GM12878 (cell line): ENCODE measurements at regions of chr1 and their contacts with region 1.

Region 1: DNA sequence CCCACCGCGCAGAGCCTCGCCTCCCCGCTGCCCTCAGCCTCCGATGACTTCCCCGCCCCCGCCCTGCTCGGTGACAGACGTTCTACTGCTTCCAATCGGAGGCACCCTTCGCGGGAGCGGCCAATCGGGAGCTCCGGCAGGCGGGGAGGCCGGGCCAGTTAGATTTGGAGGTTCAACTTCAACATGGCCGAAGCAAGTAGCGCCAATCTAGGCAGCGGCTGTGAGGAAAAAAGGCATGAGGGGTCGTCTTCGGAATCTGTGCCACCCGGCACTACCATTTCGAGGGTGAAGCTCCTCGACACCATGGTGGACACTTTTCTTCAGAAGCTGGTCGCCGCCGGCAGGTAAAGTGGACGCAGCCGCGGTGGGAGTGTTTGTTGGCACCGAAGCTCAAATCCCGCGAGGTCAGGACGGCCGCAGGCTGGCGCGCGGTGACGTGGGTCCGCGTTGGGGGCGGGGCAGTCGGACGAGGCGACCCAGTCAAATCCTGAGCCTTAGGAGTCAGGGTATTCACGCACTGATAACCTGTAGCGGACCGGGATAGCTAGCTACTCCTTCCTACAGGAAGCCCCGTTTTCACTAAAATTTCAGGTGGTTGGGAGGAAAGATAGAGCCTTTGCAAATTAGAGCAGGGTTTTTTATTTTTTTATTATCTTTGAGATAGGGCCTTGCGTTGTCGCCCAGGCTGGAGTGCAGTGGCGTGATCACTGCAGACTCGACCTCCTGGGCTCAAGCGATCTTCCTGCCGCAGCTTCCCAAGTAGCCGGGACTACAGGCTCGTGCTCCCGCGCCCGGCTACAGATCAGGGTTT is at the start of gene PMF1:
- DNase-seq: peak; percentile 88
- ATAC-seq: peak; percentile 99
- H3K4me3 ChIP-seq: peak within 1 kb of the TSS; percentile 96
- H3K27ac ChIP-seq: peak within 1 kb of the TSS; percentile 99
- H3K4me1 ChIP-seq: peaks cover 10% of the 10 kb centered on the region
- H3K27me3 ChIP-seq: no peaks in the 10 kb centered on the region
- CTCF ChIP-seq: 0 out of 6 replicates have a peak, but pooled peaks of 1 of the 3 experiments have one; percentile 1
- EP300 ChIP-seq: no peak
- POLR2A ChIP-seq: peak; percentile 94
- RAD21 ChIP-seq: no peak
- polyA plus RNA-seq, gene PMF1: 6.7 to 17.6 TPM

Region 2: DNA sequence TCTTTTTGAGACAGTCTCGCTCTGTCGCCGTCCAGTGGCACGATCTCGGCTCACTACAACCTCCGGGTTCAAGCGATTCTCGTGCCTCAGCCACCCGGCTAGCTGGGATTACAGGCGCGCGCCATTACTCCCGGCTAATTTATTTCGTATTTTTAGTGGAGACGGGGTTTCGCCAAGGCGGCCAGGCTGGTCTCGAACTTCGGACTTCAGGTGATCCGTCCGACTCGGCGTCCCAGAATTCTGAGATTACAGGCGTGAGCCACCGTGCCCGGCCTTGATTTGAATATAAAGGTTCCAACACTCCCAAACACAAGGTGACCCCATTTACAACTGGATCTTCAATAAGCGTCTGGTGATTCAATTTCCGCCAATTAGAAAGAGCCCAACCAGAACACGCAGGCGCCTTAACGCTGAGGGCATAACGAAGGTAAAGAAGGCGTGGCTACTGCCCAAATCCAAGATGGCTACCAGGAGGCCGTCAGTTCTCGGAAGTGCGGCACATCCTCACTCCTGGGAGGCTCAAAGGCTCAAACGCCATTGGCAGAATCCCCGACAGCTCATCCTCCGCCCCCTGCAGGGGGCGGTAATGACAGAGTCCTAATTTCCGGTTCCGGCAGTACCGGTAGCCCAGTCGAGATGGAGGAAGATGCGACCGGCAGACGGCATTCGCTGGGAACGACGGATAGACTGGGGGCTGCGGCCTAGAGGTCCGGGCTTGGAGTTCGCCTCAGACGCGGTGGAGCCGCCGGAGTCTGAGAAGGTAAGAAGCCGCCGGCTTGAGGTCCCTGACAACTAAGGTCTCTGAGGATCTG is 19.3 kb before region 1 on chr1 and contains the start of gene SLC25A44:
- CTCF ChIA-PET with region 1: interaction called, 28 read pairs
- POLR2A ChIA-PET with region 1: interaction called, 139 read pairs
- RAD21 ChIA-PET with region 1: interaction called, 65 read pairs
- SMC1A ChIA-PET with region 1: interaction called, 50 read pairs
- in situ Hi-C with region 1: no loop called
- intact Hi-C with region 1: no loop called
- DNase-seq: peak; percentile 100
- ATAC-seq: peak; percentile 96
- H3K4me3 ChIP-seq: peak within 1 kb of the TSS; percentile 100
- H3K27ac ChIP-seq: peak within 1 kb of the TSS; percentile 87
- H3K4me1 ChIP-seq: peaks cover 6% of the 10 kb centered on the region
- H3K27me3 ChIP-seq: no peaks in the 10 kb centered on the region
- CTCF ChIP-seq: peak; percentile 35 to 48 (median 45); a peak in 5 of 6 replicates
- EP300 ChIP-seq: no peak
- POLR2A ChIP-seq: peak; percentile 89
- RAD21 ChIP-seq: no peak
- polyA plus RNA-seq, gene SLC25A44: 7.1 to 9.2 TPM

Region 3: GRCh38 chr1:156198831-156199349 is 14.1 kb before region 1 on chr1:
- CTCF ChIA-PET with region 1: interaction called, 28 read pairs
- POLR2A ChIA-PET with region 1: interaction called, 139 read pairs
- RAD21 ChIA-PET with region 1: interaction called, 65 read pairs
- SMC1A ChIA-PET with region 1: interaction called, 50 read pairs
- in situ Hi-C with region 1: no loop called
- intact Hi-C with region 1: no loop called
- DNase-seq: peak; percentile 41
- ATAC-seq: peak; percentile 80
- H3K4me3 ChIP-seq: peak overlapping the region; percentile 50; the same call in 1 of the 2 replicates
- H3K27ac ChIP-seq: peak overlapping the region; percentile 69
- H3K4me1 ChIP-seq: peaks cover 11% of the 10 kb centered on the region
- H3K27me3 ChIP-seq: no peaks in the 10 kb centered on the region
- CTCF ChIP-seq: no peak
- EP300 ChIP-seq: peak in 1 of 2 experiments; percentile 21; a peak in 2 of 4 replicates
- POLR2A ChIP-seq: no peak
- RAD21 ChIP-seq: no peak

Region 4: GRCh38 chr1:156298852-156299357 is 85.9 kb after region 1 on chr1 and contains the start of gene VHLL:
- CTCF ChIA-PET with region 1: no interaction called
- POLR2A ChIA-PET with region 1: no interaction called
- RAD21 ChIA-PET with region 1: no interaction called
- SMC1A ChIA-PET with region 1: no interaction called
- in situ Hi-C with region 1: no loop called
- intact Hi-C with region 1: no loop called
- DNase-seq: no peak
- ATAC-seq: no peak
- H3K4me3 ChIP-seq: no peak within 1 kb of the TSS
- H3K27ac ChIP-seq: no peak within 1 kb of the TSS
- H3K4me1 ChIP-seq: peaks cover 4% of the 10 kb centered on the region
- H3K27me3 ChIP-seq: no peaks in the 10 kb centered on the region
- CTCF ChIP-seq: no peak
- EP300 ChIP-seq: no peak
- POLR2A ChIP-seq: no peak
- RAD21 ChIP-seq: no peak
- polyA plus RNA-seq, gene VHLL: not detected

Region 5: GRCh38 chr1:156421062-156421938 is 208.3 kb after region 1 on chr1:
- CTCF ChIA-PET with region 1: no interaction called
- POLR2A ChIA-PET with region 1: no interaction called
- RAD21 ChIA-PET with region 1: no interaction called
- SMC1A ChIA-PET with region 1: no interaction called
- in situ Hi-C with region 1: no loop called
- intact Hi-C with region 1: no loop called
- DNase-seq: peak; percentile 39
- ATAC-seq: peak; percentile 88
- H3K4me3 ChIP-seq: peak overlapping the region; percentile 75
- H3K27ac ChIP-seq: peak overlapping the region; percentile 33; the same call in 1 of the 2 replicates
- H3K4me1 ChIP-seq: peaks cover 8% of the 10 kb centered on the region
- H3K27me3 ChIP-seq: peaks cover 6 to 13% of the 10 kb centered on the region in 2 experiments
- CTCF ChIP-seq: no peak
- EP300 ChIP-seq: no peak
- POLR2A ChIP-seq: peak; percentile 82
- RAD21 ChIP-seq: no peak